CD8-positive, alpha-beta T cell (primary cell): ENCODE measurements at regions of chr14 and their contacts with region 1.

Region 1: GRCh38 chr14:26589810-26590367 is 7.9 kb downstream of the NOVA1 start:
- DNase-seq: no peak
- ATAC-seq: no peak
- H3K4me3 ChIP-seq: no peak overlapping the region
- H3K4me3 Mint-ChIP-seq: no peak overlapping the region
- H3K27ac ChIP-seq: no peak overlapping the region
- H3K27ac Mint-ChIP-seq: no peak overlapping the region
- H3K4me1 ChIP-seq: no peaks in the 10 kb centered on the region
- H3K4me1 Mint-ChIP-seq: no peaks in the 10 kb centered on the region
- H3K27me3 ChIP-seq: no peaks in the 10 kb centered on the region
- H3K27me3 Mint-ChIP-seq: no peaks in the 10 kb centered on the region
- CTCF ChIP-seq: no peak

Region 2: DNA sequence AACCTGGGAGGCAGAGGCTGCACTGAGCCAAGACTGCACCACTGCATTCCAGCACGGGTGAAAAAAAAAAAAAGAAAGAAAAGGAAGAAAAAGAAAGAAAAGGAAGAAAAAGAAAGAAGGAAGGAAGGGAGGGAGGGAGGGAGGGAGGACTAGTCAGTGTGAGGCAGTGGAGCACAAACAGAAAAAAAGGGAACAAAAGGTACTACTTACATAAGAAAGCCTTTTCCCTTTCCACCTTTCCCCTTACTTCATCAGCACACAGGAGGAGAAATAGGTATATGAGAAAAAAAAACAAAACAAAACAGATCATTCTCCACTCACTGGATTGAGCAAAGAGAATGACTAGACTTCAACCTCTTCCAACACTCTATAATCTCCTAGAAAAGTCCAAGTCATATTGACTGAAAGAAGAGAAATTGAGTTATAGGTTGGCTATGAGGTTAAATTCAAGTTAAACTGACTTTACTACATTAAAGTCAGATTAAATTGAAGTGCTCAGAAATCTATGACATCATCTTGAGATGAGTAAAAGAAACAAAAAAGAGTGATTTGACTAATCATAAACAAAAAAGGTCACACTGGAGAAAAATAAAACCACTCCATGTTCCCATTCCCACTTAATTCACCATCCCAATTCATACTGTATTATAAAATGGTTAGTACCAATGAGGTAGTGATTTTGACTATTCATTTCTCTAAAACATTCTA is 35.7 kb before region 1 on chr14:
- CTCF ChIA-PET with region 1: no interaction called
- POLR2A ChIA-PET with region 1: no interaction called
- intact Hi-C with region 1: loop called in 1 of 2 experiments (anchors 5 kb)
- DNase-seq: no peak
- ATAC-seq: no peak
- H3K4me3 ChIP-seq: no peak overlapping the region
- H3K4me3 Mint-ChIP-seq: no peak overlapping the region
- H3K27ac ChIP-seq: no peak overlapping the region
- H3K27ac Mint-ChIP-seq: no peak overlapping the region
- H3K4me1 ChIP-seq: no peaks in the 10 kb centered on the region
- H3K4me1 Mint-ChIP-seq: no peaks in the 10 kb centered on the region
- H3K27me3 ChIP-seq: no peaks in the 10 kb centered on the region
- H3K27me3 Mint-ChIP-seq: no peaks in the 10 kb centered on the region
- CTCF ChIP-seq: no peak